ENCODE measurements at regions of chr13 and their contacts with region 1.

Region 1: DNA sequence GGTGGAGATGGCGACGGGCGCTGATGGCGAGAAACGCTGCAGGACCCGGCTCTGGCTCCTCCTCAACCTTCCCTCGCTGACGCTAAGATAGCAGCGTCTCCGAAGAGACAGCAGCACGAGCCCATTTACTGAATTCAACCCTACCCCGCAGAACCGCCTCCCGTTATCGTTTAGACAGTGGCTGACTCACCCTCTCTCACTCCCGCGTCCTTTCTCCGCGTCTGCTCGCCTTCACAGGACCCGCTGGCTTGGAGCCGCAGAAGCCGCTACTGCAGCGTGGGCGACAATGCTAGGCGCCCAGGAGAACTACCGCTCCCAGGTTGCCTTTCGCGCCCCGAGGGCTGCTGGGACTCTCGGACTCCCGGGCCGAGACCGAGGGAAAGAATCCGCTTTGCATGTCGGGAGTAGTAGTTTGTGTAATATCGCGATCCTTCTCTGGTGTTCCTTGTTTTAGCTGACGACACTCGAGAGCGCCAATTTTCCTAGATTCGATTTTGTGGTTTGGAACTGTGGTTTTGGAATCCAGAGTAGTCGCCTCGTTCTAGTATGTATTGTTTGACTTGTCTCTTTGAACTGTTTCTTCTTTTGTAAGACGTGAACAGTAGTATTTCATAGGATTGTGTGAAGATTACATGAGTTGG is at the start of gene KBTBD6:
- DNase-seq: peak; percentile 97 to 98 (median 97)
- ATAC-seq: peak; percentile 99 to 100 (median 99)
- H3K4me3 ChIP-seq: peak within 1 kb of the TSS; percentile 61 to 79 (median 79)
- H3K27ac ChIP-seq: peak within 1 kb of the TSS; percentile 41 to 80 (median 56)
- H3K4me1 ChIP-seq: peaks cover 0 to 15% (median 0%) of the 10 kb centered on the region in 4 donors
- H3K27me3 ChIP-seq: no peaks in the 10 kb centered on the region
- CTCF ChIP-seq: peak in 1 of 4 donors; percentile 4
- POLR2A ChIP-seq: peak; percentile 41
- total RNA-seq, gene KBTBD6: 2.3 to 4.7 (median 3.7) TPM

Region 2: DNA sequence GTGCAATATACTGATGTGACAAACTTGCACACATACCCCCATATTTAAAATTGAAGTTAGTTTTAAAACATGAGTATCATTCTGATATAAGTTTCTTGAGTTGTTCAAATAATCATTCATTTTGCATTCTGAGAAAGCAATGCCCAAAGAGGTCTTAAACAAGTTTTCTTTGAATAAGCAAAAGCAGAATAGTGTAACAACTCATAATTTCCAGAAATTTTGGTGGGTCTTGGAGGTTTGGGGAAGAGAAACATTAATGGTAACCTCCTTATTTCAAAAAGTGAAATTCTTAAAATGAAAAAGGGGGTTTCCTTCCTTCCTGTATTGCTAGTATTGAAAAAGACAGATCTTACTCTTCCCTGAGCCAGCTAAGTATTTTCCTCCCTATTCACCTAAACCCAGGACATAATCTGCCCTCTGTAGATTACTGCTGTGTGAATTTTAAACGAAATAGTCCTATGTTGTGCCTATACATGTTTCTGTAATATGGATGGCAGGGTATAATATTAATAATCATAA is 312.8 kb before region 1 on chr13:
- intact Hi-C with region 1: no loop called
- DNase-seq: no peak
- ATAC-seq: no peak
- H3K4me3 ChIP-seq: no peak overlapping the region
- H3K27ac ChIP-seq: no peak overlapping the region
- H3K4me1 ChIP-seq: no peaks in the 10 kb centered on the region
- H3K27me3 ChIP-seq: no peaks in the 10 kb centered on the region
- CTCF ChIP-seq: no peak
- POLR2A ChIP-seq: no peak

Region 3: DNA sequence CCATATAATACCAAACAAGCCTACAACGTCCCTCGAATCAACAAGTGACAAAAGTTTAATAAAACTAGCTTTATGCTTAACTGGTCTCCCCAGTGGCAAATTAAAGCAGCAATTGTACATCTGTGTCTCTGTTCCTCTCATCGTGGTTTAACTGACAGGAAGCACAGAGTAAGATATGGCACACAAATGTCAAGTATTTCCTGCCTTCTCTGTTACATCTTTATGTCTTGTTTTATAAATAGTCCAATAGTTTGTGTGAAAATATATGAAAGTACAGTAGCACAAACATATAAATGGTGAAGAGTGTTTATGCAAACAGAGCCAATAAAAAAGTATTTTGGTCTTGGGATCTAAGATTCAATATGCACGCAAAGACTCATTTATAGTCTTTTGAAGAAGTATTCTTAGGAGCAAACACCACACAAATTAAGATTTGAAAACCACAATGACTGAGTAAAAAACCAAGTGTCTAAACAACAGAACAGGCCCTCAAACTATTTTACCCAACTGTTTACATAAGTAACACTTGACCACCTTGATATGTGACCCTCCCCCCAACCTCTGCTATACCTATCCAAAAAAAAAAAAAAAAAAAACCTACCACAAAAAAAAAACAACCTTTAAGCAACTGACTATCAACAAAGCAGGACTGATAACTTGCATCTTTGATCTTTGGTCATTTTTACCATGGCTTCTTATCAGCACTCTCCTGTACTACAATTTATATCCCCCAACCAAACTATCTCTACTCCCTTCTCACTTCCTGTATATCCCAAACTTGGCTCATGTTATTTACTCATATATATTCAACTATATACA is 127.5 kb before region 1 on chr13:
- intact Hi-C with region 1: no loop called
- DNase-seq: no peak
- ATAC-seq: peak in 2 of 4 donors; percentile 17 to 42
- H3K4me3 ChIP-seq: no peak overlapping the region
- H3K27ac ChIP-seq: peak overlapping the region in 2 of 3 donors; percentile 20 to 31
- H3K4me1 ChIP-seq: peaks cover 0 to 55% (median 14%) of the 10 kb centered on the region in 4 donors
- H3K27me3 ChIP-seq: no peaks in the 10 kb centered on the region
- CTCF ChIP-seq: no peak
- POLR2A ChIP-seq: no peak

Region 4: GRCh38 chr13:41029629-41030028 is 103.0 kb before region 1 on chr13:
- intact Hi-C with region 1: no loop called
- DNase-seq: no peak
- ATAC-seq: no peak
- H3K4me3 ChIP-seq: no peak overlapping the region
- H3K27ac ChIP-seq: no peak overlapping the region
- H3K4me1 ChIP-seq: peaks cover 0 to 17% (median 4%) of the 10 kb centered on the region in 4 donors
- H3K27me3 ChIP-seq: no peaks in the 10 kb centered on the region
- CTCF ChIP-seq: no peak
- POLR2A ChIP-seq: no peak

Region 5: GRCh38 chr13:41193919-41194824 is 61.5 kb after region 1 on chr13 and contains the start of gene KBTBD7:
- intact Hi-C with region 1: loop called (anchors 10 kb)
- DNase-seq: peak; percentile 95 to 96 (median 96)
- ATAC-seq: peak; percentile 99
- H3K4me3 ChIP-seq: peak within 1 kb of the TSS; percentile 51 to 88 (median 68)
- H3K27ac ChIP-seq: peak within 1 kb of the TSS; percentile 72 to 93 (median 83)
- H3K4me1 ChIP-seq: peaks cover 0 to 19% (median 6%) of the 10 kb centered on the region in 4 donors
- H3K27me3 ChIP-seq: no peaks in the 10 kb centered on the region
- CTCF ChIP-seq: no peak
- POLR2A ChIP-seq: peak; percentile 68
- total RNA-seq, gene KBTBD7: 3.0 to 6.7 (median 5.5) TPM